Breast epithelium (tissue), 4 donors: ENCODE measurements at regions of chr4 and their contacts with region 1.

Region 1: DNA sequence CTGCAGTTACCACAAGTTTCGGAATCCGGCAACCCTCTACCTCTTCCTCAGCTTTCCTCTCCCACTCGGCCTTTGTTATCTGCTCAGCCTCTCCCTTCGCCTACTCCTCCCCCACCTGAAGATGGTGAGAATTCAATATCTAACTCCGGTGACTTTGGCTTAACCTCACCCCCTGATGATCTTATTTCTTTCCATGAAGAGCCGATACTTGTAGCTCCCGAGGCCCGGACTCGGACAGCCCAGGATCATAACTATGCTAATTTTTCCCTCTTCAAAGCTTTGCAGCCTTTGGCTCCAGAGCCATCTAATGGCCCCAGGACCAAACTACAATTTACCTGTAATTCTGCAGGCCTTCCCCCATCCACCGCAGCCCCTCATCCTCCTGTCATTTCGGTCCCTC is 32.0 kb upstream of the MGST2 start:
- DNase-seq: no peak
- H3K4me3 ChIP-seq: peak overlapping the region in 2 of 3 donors; percentile 21 to 53
- H3K27ac ChIP-seq: no peak overlapping the region
- H3K4me1 ChIP-seq: no peaks in the 10 kb centered on the region
- H3K27me3 ChIP-seq: no peaks in the 10 kb centered on the region
- CTCF ChIP-seq: peak in 1 of 3 donors; percentile 42
- POLR2A ChIP-seq: no peak

Region 2: GRCh38 chr4:138320831-138321230 is 1312.8 kb before region 1 on chr4:
- intact Hi-C with region 1: no loop called
- DNase-seq: no peak
- H3K4me3 ChIP-seq: no peak overlapping the region
- H3K27ac ChIP-seq: no peak overlapping the region
- H3K4me1 ChIP-seq: no peaks in the 10 kb centered on the region
- H3K27me3 ChIP-seq: no peaks in the 10 kb centered on the region
- CTCF ChIP-seq: no peak
- POLR2A ChIP-seq: no peak

Region 3: GRCh38 chr4:139493176-139493575 is 140.5 kb before region 1 on chr4:
- intact Hi-C with region 1: loop called (anchors 10 kb)
- DNase-seq: no peak
- H3K4me3 ChIP-seq: no peak overlapping the region
- H3K27ac ChIP-seq: no peak overlapping the region
- H3K4me1 ChIP-seq: no peaks in the 10 kb centered on the region
- H3K27me3 ChIP-seq: no peaks in the 10 kb centered on the region
- CTCF ChIP-seq: no peak
- POLR2A ChIP-seq: no peak